Thyroid gland (tissue), 4 donors: ENCODE measurements at regions of chr12 and their contacts with region 1.

Region 1: GRCh38 chr12:89529738-89530137 is 3.9 kb upstream of the POC1B start:
- DNase-seq: no peak
- H3K4me3 ChIP-seq: no peak overlapping the region
- H3K27ac ChIP-seq: no peak overlapping the region
- H3K4me1 ChIP-seq: peaks cover 6 to 10% of the 10 kb centered on the region in 2 donors
- H3K27me3 ChIP-seq: no peaks in the 10 kb centered on the region
- CTCF ChIP-seq: peak in 5 of 6 experiments; percentile 29 to 72 (median 62)
- POLR2A ChIP-seq: no peak

Region 2: GRCh38 chr12:89470741-89471509 is 58.8 kb before region 1 on chr12:
- intact Hi-C with region 1: loop called (anchors 5 kb)
- DNase-seq: no peak
- H3K4me3 ChIP-seq: no peak overlapping the region
- H3K27ac ChIP-seq: no peak overlapping the region
- H3K4me1 ChIP-seq: no peaks in the 10 kb centered on the region
- H3K27me3 ChIP-seq: no peaks in the 10 kb centered on the region
- CTCF ChIP-seq: peak in 4 of 6 experiments; percentile 23 to 54 (median 48)
- POLR2A ChIP-seq: no peak